ENCODE measurements at regions of chr4 and their contacts with region 1.

Region 1: DNA sequence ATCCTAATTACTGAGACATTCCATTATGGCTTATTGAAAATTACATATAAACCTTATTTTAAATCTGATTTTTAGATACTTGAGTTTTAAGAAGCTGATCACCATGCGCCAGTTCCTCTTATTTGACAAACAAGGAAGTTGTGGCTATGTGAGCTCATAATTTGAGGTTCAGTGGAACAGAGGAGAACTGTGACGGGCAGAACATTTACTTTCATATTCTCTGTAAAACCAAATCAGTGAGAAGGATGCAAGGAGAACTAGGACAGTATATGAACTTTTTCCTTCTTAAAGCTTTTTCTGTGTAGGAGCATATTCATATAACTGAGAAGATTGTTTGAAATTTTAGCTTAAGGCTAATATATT is 25.3 kb downstream of the STIM2 start:
- DNase-seq: peak in 7 of 9 donors; percentile 60 to 81 (median 77)
- ATAC-seq: peak; percentile 76
- H3K4me3 ChIP-seq: peak overlapping the region; percentile 45
- H3K4me3 Mint-ChIP-seq: peak overlapping the region; percentile 70 to 91 (median 82)
- H3K27ac ChIP-seq: peak overlapping the region; percentile 73
- H3K27ac Mint-ChIP-seq: peak overlapping the region; percentile 93 to 98 (median 95)
- H3K4me1 ChIP-seq: peaks cover 32 to 39% of the 10 kb centered on the region in 2 donors
- H3K4me1 Mint-ChIP-seq: peaks cover 33 to 95% (median 84%) of the 10 kb centered on the region in 7 donors
- H3K27me3 ChIP-seq: no peaks in the 10 kb centered on the region
- H3K27me3 Mint-ChIP-seq: no peaks in the 10 kb centered on the region

Region 2: GRCh38 chr4:26076000-26076587 is 809.8 kb before region 1 on chr4:
- CTCF ChIA-PET with region 1: no interaction called
- POLR2A ChIA-PET with region 1: no interaction called
- intact Hi-C with region 1: loop called in 1 of 2 experiments (anchors 10 kb)
- DNase-seq: peak in 1 of 9 donors; percentile 53
- ATAC-seq: peak; percentile 77
- H3K4me3 ChIP-seq: no peak overlapping the region
- H3K4me3 Mint-ChIP-seq: peak overlapping the region in 1 of 10 donors; percentile 63
- H3K27ac ChIP-seq: no peak overlapping the region
- H3K27ac Mint-ChIP-seq: peak overlapping the region in 1 of 9 donors; percentile 91
- H3K4me1 ChIP-seq: peaks cover 0 to 15% of the 10 kb centered on the region in 2 donors
- H3K4me1 Mint-ChIP-seq: peaks cover 3 to 63% (median 14%) of the 10 kb centered on the region in 7 donors
- H3K27me3 ChIP-seq: no peaks in the 10 kb centered on the region
- H3K27me3 Mint-ChIP-seq: peaks cover 0 to 15% (median 0%) of the 10 kb centered on the region in 5 donors

Region 3: DNA sequence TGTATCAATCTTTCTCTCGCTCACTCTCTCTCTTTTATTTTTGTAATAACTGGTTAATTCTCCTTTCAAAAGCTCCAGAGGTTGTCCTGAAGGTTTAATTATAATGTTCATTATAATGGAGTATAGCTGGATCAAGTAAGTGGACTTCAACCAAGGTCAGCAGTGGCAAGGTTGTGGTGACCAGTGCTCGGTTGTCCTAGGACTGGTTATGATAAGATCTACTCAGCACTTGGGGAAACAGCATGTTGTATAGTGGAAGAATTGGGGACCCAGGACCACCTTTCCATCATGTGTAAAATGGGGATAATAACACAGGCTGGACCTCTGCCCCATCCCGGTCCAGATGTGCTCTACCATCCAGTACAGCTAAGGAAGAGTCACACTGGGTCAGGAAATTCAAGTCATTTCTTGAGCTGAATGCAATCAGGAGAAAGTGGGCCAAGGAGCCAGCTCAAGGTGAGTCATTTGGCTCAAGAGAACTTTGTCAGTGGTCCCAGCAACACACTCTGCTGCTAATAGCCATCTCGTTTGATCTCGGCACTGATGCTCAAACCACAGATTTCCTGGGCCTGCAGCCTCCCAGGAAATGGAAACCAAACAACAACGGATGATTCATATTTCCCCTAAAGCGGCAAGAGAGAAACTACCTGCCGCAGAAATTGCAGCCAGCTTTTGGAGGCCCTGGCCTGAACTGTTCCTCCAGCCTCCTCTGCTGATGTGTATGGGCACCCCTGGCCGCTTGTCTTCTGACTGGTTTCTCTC is 688.7 kb before region 1 on chr4:
- CTCF ChIA-PET with region 1: no interaction called
- POLR2A ChIA-PET with region 1: no interaction called
- intact Hi-C with region 1: loop called in 1 of 2 experiments (anchors 10 kb)
- DNase-seq: peak in 5 of 9 donors; percentile 1 to 74 (median 6)
- ATAC-seq: peak; percentile 78
- H3K4me3 ChIP-seq: peak overlapping the region; percentile 31
- H3K4me3 Mint-ChIP-seq: peak overlapping the region in 9 of 10 donors; percentile 21 to 82 (median 63)
- H3K27ac ChIP-seq: peak overlapping the region; percentile 38
- H3K27ac Mint-ChIP-seq: peak overlapping the region in 8 of 9 donors; percentile 42 to 95 (median 80)
- H3K4me1 ChIP-seq: peaks cover 17 to 37% of the 10 kb centered on the region in 2 donors
- H3K4me1 Mint-ChIP-seq: peaks cover 18 to 80% (median 30%) of the 10 kb centered on the region in 7 donors
- H3K27me3 ChIP-seq: no peaks in the 10 kb centered on the region
- H3K27me3 Mint-ChIP-seq: no peaks in the 10 kb centered on the region

Region 4: DNA sequence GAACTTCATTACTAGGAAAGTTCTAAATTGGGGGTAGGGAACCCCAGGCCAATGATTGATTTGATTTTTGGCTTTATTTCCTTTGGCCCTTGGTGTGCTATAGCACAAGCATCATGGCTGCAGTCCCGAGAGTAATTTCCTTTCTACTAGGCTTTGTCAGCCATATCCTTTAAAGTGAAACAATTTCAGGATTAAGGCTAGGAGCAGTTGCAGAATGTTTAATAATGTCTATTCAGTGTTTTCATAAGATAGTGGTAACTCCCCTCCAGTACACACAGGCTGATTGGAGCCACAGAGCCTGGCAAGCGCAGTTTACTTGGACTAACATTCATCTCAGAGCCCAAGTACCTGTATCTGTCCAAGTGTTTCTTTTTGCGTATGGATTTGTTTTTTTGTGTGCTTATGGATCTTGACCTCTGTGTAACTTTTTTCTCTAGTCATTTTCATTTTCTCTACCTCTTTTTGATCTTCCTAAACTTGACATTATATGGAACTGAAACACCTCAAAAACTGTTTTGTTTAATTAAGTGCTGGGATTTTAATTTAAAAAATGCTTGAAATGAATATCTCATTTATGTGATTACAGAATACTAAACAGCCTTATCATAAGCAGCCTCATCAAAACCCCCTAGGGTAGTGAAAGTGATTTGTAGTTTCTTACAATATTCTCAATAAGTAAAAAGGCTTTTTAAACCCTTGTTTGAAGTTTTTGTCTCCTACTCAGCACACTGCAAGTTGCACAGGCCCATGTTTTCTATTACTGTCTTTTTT is 17.8 kb before region 1 on chr4:
- CTCF ChIA-PET with region 1: interaction called, 4 read pairs
- POLR2A ChIA-PET with region 1: interaction called, 50 read pairs
- intact Hi-C with region 1: loop called (anchors 1 kb)
- DNase-seq: no peak
- ATAC-seq: no peak
- H3K4me3 ChIP-seq: no peak overlapping the region
- H3K4me3 Mint-ChIP-seq: peak overlapping the region; percentile 30 to 78 (median 62)
- H3K27ac ChIP-seq: peak overlapping the region; percentile 30
- H3K27ac Mint-ChIP-seq: peak overlapping the region; percentile 1 to 79 (median 47)
- H3K4me1 ChIP-seq: peaks cover 59 to 64% of the 10 kb centered on the region in 2 donors
- H3K4me1 Mint-ChIP-seq: peaks cover 69 to 95% (median 90%) of the 10 kb centered on the region in 7 donors
- H3K27me3 ChIP-seq: no peaks in the 10 kb centered on the region
- H3K27me3 Mint-ChIP-seq: no peaks in the 10 kb centered on the region

Region 5: GRCh38 chr4:26873391-26874026 is 12.4 kb before region 1 on chr4:
- CTCF ChIA-PET with region 1: interaction called, 6 read pairs
- POLR2A ChIA-PET with region 1: interaction called, 50 read pairs
- intact Hi-C with region 1: loop called (anchors 1 kb)
- DNase-seq: peak in 5 of 9 donors; percentile 41 to 55 (median 49)
- ATAC-seq: peak; percentile 94
- H3K4me3 ChIP-seq: peak overlapping the region; percentile 11
- H3K4me3 Mint-ChIP-seq: peak overlapping the region in 9 of 10 donors; percentile 52 to 82 (median 74)
- H3K27ac ChIP-seq: peak overlapping the region; percentile 45
- H3K27ac Mint-ChIP-seq: peak overlapping the region in 8 of 9 donors; percentile 72 to 92 (median 82)
- H3K4me1 ChIP-seq: peaks cover 46 to 52% of the 10 kb centered on the region in 2 donors
- H3K4me1 Mint-ChIP-seq: peaks cover 52 to 95% (median 90%) of the 10 kb centered on the region in 7 donors
- H3K27me3 ChIP-seq: no peaks in the 10 kb centered on the region
- H3K27me3 Mint-ChIP-seq: no peaks in the 10 kb centered on the region

Region 6: GRCh38 chr4:26896636-26897035 is 10.7 kb after region 1 on chr4:
- CTCF ChIA-PET with region 1: no interaction called
- POLR2A ChIA-PET with region 1: interaction called, 6 read pairs
- intact Hi-C with region 1: loop called in 1 of 2 experiments (anchors 1 kb)
- DNase-seq: no peak
- ATAC-seq: no peak
- H3K4me3 ChIP-seq: no peak overlapping the region
- H3K4me3 Mint-ChIP-seq: peak overlapping the region in 2 of 10 donors; percentile 1 to 15
- H3K27ac ChIP-seq: no peak overlapping the region
- H3K27ac Mint-ChIP-seq: peak overlapping the region in 3 of 9 donors; percentile 32 to 47 (median 40)
- H3K4me1 ChIP-seq: peaks cover 7 to 23% of the 10 kb centered on the region in 2 donors
- H3K4me1 Mint-ChIP-seq: peaks cover 42 to 87% (median 82%) of the 10 kb centered on the region in 7 donors
- H3K27me3 ChIP-seq: no peaks in the 10 kb centered on the region
- H3K27me3 Mint-ChIP-seq: no peaks in the 10 kb centered on the region

Region 7: DNA sequence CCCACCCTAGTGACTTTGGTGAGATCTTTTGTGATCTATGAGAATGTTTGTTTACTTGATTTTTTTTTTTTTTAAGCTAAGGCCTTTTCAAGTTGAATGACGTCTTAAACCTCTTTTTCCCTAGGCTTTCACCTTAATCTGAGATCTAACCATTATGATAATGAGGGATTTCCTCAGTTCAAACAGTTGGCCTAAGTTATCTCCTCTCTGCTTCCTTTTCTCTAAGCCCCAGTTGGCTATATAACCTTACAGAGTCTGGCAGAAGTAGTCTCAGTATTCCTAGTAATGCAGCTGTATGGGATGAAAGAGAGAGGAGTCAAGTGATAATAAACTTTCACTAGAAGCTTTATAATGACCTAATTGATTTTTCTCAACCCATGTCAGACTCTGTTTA is 73.8 kb after region 1 on chr4:
- CTCF ChIA-PET with region 1: no interaction called
- POLR2A ChIA-PET with region 1: no interaction called
- intact Hi-C with region 1: no loop called
- DNase-seq: peak in 1 of 9 donors; percentile 12
- ATAC-seq: peak; percentile 52
- H3K4me3 ChIP-seq: no peak overlapping the region
- H3K4me3 Mint-ChIP-seq: peak overlapping the region in 5 of 10 donors; percentile 0 to 42 (median 4)
- H3K27ac ChIP-seq: no peak overlapping the region
- H3K27ac Mint-ChIP-seq: peak overlapping the region in 5 of 9 donors; percentile 14 to 67 (median 38)
- H3K4me1 ChIP-seq: peaks cover 0 to 11% of the 10 kb centered on the region in 2 donors
- H3K4me1 Mint-ChIP-seq: peaks cover 24 to 83% (median 71%) of the 10 kb centered on the region in 7 donors
- H3K27me3 ChIP-seq: no peaks in the 10 kb centered on the region
- H3K27me3 Mint-ChIP-seq: no peaks in the 10 kb centered on the region

Measured in naive thymus-derived CD4-positive, alpha-beta T cell (primary cell).